Gastrocnemius medialis (tissue), 4 donors: ENCODE measurements at regions of chr5 and their contacts with region 1.

Region 1: DNA sequence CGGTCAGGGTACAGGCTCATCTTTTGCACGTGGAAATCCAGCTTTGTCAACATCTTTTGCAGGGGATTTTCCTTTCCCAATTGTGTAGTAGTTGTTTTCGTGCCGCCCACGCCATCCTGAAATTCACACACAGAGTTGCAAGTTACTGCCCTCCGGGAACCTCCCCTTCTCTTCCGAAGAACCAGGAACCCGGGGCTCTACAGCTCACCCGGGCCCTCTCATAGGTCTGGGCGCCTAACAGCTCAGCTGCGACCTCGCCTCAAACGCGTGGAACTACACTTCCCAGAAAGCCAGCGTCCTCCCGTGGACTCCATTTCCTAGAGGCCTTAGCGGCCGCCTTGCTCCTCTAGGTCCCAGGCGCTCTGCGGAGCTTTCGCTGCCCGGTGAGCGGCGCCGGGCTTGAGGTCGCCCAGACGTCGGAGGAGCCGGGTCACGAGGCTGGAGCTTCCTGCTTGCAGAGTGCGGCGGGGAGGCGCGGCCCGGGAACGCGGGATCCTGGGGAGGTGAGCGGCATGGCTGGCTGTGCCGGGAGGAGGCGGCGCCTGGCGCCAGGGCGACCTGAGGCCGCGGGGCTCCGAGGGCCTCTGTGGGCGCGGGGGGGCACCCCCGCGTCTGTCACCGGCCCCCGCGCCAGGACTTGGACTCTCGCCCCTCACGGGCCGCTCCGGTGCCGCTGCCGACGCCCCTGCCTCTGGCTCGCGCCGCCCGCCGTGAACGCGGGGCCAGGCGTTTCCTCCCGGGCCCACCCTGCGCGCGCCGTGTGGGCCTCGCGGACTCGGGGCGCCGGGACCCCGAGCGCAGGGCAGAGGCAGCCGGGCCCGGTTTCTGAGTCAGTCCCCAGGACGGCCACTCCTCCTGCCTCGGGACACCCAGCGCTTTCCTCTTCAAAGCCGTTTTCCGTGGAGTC is at the start of gene ZNF354B:
- DNase-seq: peak; percentile 86
- ATAC-seq: peak; percentile 99
- H3K4me3 ChIP-seq: peak within 1 kb of the TSS; percentile 61 to 78 (median 66)
- H3K27ac ChIP-seq: peak within 1 kb of the TSS; percentile 70 to 85 (median 81)
- H3K4me1 ChIP-seq: peaks cover 2 to 6% of the 10 kb centered on the region in 2 donors
- H3K27me3 ChIP-seq: no peaks in the 10 kb centered on the region
- CTCF ChIP-seq: peak in 1 of 5 experiments; percentile 29
- POLR2A ChIP-seq: peak; percentile 61 to 73
- total RNA-seq, gene ZNF354B: 4.4 to 11.3 (median 5.0) TPM

Region 2: DNA sequence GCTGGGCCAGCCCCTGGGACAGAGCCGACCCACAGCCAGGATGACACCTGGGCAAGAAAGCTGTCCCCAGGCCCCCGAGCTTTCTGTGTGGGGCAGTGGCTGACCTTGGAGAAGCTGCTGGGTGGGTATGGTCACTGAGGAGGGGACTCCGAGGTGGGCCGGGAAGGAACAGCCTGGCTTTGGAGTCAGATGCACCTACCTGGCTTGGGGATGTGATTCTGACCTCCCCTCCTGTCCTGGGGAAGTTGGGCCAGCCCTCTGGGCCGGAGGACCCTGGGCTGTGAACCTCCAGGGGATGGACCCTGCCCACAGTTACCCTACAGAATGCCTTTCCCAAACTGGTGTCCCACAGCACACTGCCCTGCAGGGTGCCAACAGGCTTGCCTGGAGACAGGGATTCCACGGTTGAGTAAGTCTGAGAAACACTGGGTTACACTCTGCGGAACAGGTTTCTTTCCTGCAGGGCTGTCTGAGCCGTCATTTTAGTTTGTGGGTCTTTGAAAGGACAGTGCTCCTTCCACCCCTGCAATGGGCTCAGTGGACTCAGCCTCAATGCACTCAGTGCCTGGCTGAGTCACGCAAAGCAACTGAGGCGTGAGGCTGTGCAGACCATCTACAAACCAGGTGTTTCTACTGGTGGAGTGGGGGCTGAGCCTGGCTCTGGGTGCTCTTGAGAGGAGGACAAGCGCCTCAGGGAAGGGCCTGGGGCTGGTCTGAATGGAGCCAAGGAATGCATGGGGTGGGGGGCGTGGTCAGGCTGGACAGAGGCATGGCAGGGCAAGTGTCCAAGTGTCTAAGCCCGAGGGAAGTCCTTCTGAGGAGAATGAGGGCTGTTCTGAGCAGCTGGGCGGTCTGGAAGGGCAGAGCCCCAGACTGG is 586.0 kb before region 1 on chr5:
- in situ Hi-C with region 1: loop called in 1 of 4 experiments (anchors 25 kb)
- intact Hi-C with region 1: no loop called
- DNase-seq: no peak
- ATAC-seq: no peak
- H3K4me3 ChIP-seq: no peak overlapping the region
- H3K27ac ChIP-seq: no peak overlapping the region
- H3K4me1 ChIP-seq: no peaks in the 10 kb centered on the region
- H3K27me3 ChIP-seq: no peaks in the 10 kb centered on the region
- CTCF ChIP-seq: no peak
- POLR2A ChIP-seq: no peak

Region 3: GRCh38 chr5:178732281-178732680 is 127.6 kb before region 1 on chr5:
- in situ Hi-C with region 1: loop called in 2 of 4 experiments (anchors 10 kb)
- intact Hi-C with region 1: loop called (anchors 1 kb)
- DNase-seq: no peak
- ATAC-seq: no peak
- H3K4me3 ChIP-seq: no peak overlapping the region
- H3K27ac ChIP-seq: no peak overlapping the region
- H3K4me1 ChIP-seq: peaks cover 0 to 4% of the 10 kb centered on the region in 2 donors
- H3K27me3 ChIP-seq: no peaks in the 10 kb centered on the region
- CTCF ChIP-seq: no peak
- POLR2A ChIP-seq: no peak

Region 4: DNA sequence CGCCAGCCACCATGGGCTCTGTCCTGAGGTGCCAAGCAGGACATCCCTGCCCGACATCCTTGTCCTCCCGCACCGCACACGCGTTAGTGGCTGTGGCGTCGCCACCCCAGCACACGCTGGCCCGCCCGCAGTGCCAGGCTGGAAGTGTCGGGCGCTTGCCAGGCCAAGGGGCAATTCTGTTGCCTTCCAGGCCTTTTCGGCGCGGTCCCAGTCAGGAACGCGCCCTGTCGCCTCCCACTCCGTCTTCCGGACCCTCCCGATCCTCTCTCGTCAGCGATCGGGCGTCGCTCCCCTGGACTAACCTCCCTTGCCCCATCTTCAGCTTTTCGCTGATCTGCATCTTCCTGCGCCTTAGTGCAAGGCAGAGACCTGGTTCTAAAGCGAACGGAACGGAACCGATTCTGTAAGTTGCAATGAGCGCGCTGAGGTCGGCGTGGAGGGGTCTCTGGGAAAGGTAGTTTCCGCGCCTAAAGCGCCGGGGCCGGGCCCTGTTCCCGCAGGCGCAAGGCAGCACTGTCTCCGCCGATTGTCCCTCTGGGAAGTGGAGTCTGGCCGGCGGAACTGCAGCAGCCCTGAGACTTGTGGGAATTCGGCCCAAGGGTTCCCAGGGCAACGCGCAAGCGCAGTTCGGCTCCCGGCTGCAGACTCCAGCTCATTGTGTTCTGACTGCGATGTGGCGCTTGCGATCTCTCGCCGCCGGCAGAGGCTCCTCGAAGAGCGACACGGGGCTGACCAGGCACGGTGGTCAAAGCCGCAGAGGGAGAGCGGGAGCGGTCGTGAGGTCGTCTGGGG is 80.9 kb after region 1 on chr5 and contains the start of gene ZNF454:
- in situ Hi-C with region 1: no loop called
- intact Hi-C with region 1: loop called (anchors 2 kb)
- DNase-seq: peak; percentile 47 to 50
- ATAC-seq: peak; percentile 49 to 50
- H3K4me3 ChIP-seq: peak within 1 kb of the TSS; percentile 53 to 59 (median 57)
- H3K27ac ChIP-seq: peak within 1 kb of the TSS; percentile 15 to 46 (median 26)
- H3K4me1 ChIP-seq: no peaks in the 10 kb centered on the region
- H3K27me3 ChIP-seq: peaks cover 0 to 21% (median 13%) of the 10 kb centered on the region in 3 donors
- CTCF ChIP-seq: no peak
- POLR2A ChIP-seq: no peak
- total RNA-seq, gene ZNF454: 0.17 to 0.71 (median 0.36) TPM

Region 5: GRCh38 chr5:179044765-179045164 is 184.9 kb after region 1 on chr5:
- in situ Hi-C with region 1: no loop called
- intact Hi-C with region 1: no loop called
- DNase-seq: no peak
- ATAC-seq: no peak
- H3K4me3 ChIP-seq: no peak overlapping the region
- H3K27ac ChIP-seq: no peak overlapping the region
- H3K4me1 ChIP-seq: no peaks in the 10 kb centered on the region
- H3K27me3 ChIP-seq: no peaks in the 10 kb centered on the region
- CTCF ChIP-seq: no peak
- POLR2A ChIP-seq: no peak

Region 6: GRCh38 chr5:179060116-179061008 is 200.5 kb after region 1 on chr5 and contains the start of gene ZNF354C:
- in situ Hi-C with region 1: loop called (anchors 5 to 10 kb)
- intact Hi-C with region 1: loop called (anchors 1 kb)
- DNase-seq: peak; percentile 74 to 77
- ATAC-seq: peak; percentile 90 to 95
- H3K4me3 ChIP-seq: peak within 1 kb of the TSS; percentile 71 to 91 (median 84)
- H3K27ac ChIP-seq: peak within 1 kb of the TSS; percentile 63 to 76 (median 74)
- H3K4me1 ChIP-seq: peaks cover 5 to 7% of the 10 kb centered on the region in 2 donors
- H3K27me3 ChIP-seq: peaks cover 0 to 4% (median 0%) of the 10 kb centered on the region in 3 donors
- CTCF ChIP-seq: peak in 1 of 5 experiments; percentile 15
- POLR2A ChIP-seq: peak in 1 of 2 donors; percentile 48
- total RNA-seq, gene ZNF354C: 1.6 to 3.5 (median 2.3) TPM